ENCODE measurements at regions of chr2 and their contacts with region 1.

Region 1: DNA sequence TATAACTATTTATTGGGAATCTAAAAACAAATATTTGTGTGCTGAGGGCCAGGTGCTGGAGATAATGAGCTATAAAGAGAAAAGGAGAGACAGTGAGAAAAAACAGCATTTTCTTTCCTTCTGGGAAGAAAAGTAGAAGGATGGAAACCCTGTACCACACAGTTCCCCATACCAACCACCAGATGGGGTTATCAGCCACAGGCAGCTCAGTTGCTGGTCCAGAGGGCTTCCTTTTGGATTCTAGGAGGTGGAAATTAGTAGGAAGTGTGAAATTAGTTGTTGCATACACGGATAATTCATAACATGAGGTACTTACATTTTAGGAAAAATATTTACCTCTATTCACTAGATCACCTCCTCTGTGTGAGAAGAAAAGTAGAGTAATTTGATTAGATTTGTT is 237.0 kb upstream of the FOSL2 start:
- DNase-seq: no peak
- H3K4me3 ChIP-seq: no peak overlapping the region
- H3K27ac ChIP-seq: no peak overlapping the region
- H3K4me1 ChIP-seq: no peaks in the 10 kb centered on the region
- H3K27me3 ChIP-seq: no peaks in the 10 kb centered on the region
- CTCF ChIP-seq: peak; percentile 74 to 86 (median 83)
- EP300 ChIP-seq: no peak
- POLR2A ChIP-seq: no peak
- RAD21 ChIP-seq: peak; percentile 92 to 93

Region 2: DNA sequence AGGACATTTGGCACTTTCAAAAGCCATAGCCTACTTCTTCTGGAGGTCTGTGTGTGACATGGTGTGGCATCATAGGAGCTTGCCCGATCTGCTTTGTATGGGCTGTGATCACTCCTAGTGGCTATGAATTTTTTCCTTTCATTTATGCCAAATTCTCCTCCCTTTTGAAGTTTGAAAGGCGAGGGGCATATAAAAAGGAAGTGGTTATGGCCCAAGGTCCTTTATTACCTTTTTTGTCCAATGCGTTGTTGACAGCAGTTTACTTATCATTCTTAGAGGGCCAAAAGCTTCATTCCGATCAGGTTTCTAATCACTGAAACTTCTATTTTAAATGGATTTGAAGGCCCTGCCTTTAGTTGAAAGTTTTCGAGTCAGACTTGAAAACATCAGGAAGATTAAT is 12.7 kb after region 1 on chr2:
- CTCF ChIA-PET with region 1: interaction called, 12 read pairs
- POLR2A ChIA-PET with region 1: no interaction called
- DNase-seq: no peak
- H3K4me3 ChIP-seq: no peak overlapping the region
- H3K27ac ChIP-seq: no peak overlapping the region
- H3K4me1 ChIP-seq: no peaks in the 10 kb centered on the region
- H3K27me3 ChIP-seq: no peaks in the 10 kb centered on the region
- CTCF ChIP-seq: no peak
- EP300 ChIP-seq: no peak
- POLR2A ChIP-seq: no peak
- RAD21 ChIP-seq: no peak

Region 3: GRCh38 chr2:28403370-28403956 is 247.8 kb after region 1 on chr2:
- CTCF ChIA-PET with region 1: interaction called, 12 read pairs
- POLR2A ChIA-PET with region 1: no interaction called
- DNase-seq: no peak
- H3K4me3 ChIP-seq: no peak overlapping the region
- H3K27ac ChIP-seq: no peak overlapping the region
- H3K4me1 ChIP-seq: no peaks in the 10 kb centered on the region; a peak in 1 of 7 replicates
- H3K27me3 ChIP-seq: no peaks in the 10 kb centered on the region
- CTCF ChIP-seq: no peak
- EP300 ChIP-seq: no peak
- POLR2A ChIP-seq: no peak
- RAD21 ChIP-seq: no peak

Measured in H1 (cell line).